ENCODE measurements at regions of chr17 and their contacts with region 1.

Region 1: DNA sequence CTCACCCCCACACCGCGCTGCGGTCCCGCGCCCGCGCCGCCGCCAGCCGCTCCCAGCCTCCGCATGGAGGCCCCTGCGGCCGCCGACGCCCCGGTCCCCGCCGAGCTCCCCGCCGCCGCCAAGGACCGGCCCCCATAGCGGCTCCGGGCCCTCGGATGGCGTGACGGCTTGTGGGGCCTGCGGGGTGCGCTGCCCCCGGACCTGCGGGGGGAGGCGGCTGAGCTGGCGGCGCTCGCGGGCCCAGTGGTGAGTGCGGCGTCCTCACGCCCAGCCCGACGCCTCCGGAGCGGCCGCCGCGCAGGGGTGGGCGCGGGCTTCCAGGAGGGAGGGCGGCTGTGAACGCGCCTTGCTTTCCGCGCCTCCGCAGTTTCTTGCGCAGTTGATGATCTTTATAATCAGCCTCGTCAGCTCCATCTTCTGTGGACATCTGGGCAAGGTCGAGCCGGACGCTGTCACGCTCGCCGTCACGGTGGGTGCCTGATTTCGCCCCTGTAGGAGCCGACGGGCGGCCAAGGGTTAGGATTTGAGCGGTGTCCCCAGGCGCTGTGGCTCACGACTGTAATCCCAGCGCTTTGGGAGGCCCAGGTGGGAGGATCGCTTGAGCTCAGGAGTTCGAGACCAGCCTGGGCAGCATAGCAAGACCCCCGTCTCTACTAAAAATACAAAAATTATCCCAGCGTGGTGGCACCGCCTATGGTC is 46.4 kb downstream of the SLC47A1 start:
- DNase-seq: peak in 1 of 2 donors; percentile 83
- ATAC-seq: peak; percentile 62
- H3K4me3 ChIP-seq: peak overlapping the region; percentile 15 to 48
- H3K27ac ChIP-seq: no peak overlapping the region
- H3K4me1 ChIP-seq: no peaks in the 10 kb centered on the region
- H3K27me3 ChIP-seq: no peaks in the 10 kb centered on the region

Region 2: GRCh38 chr17:19482576-19482975 is 97.4 kb before region 1 on chr17:
- intact Hi-C with region 1: no loop called
- DNase-seq: no peak
- ATAC-seq: peak; percentile 51
- H3K4me3 ChIP-seq: no peak overlapping the region
- H3K27ac ChIP-seq: no peak overlapping the region
- H3K4me1 ChIP-seq: no peaks in the 10 kb centered on the region
- H3K27me3 ChIP-seq: no peaks in the 10 kb centered on the region

Region 3: GRCh38 chr17:19523690-19524089 is 56.3 kb before region 1 on chr17:
- intact Hi-C with region 1: loop called in 1 of 2 experiments (anchors 1 kb)
- DNase-seq: no peak
- ATAC-seq: no peak
- H3K4me3 ChIP-seq: no peak overlapping the region
- H3K27ac ChIP-seq: no peak overlapping the region
- H3K4me1 ChIP-seq: no peaks in the 10 kb centered on the region
- H3K27me3 ChIP-seq: no peaks in the 10 kb centered on the region

Region 4: GRCh38 chr17:19533718-19534561 is 46.1 kb before region 1 on chr17 and contains the start of gene SLC47A1:
- intact Hi-C with region 1: no loop called
- DNase-seq: peak; percentile 62 to 84
- ATAC-seq: peak; percentile 88
- H3K4me3 ChIP-seq: peak within 1 kb of the TSS; percentile 63 to 65
- H3K27ac ChIP-seq: no peak within 1 kb of the TSS
- H3K4me1 ChIP-seq: no peaks in the 10 kb centered on the region
- H3K27me3 ChIP-seq: no peaks in the 10 kb centered on the region
- total RNA-seq, gene SLC47A1: 5.7 to 7.3 TPM

Region 5: GRCh38 chr17:19672009-19672750 is 92.2 kb after region 1 on chr17:
- intact Hi-C with region 1: no loop called
- DNase-seq: no peak
- ATAC-seq: peak; percentile 15
- H3K4me3 ChIP-seq: no peak overlapping the region
- H3K27ac ChIP-seq: peak overlapping the region in 1 of 2 donors; percentile 19
- H3K4me1 ChIP-seq: no peaks in the 10 kb centered on the region
- H3K27me3 ChIP-seq: no peaks in the 10 kb centered on the region

Region 6: GRCh38 chr17:19781488-19782458 is 201.8 kb after region 1 on chr17:
- intact Hi-C with region 1: no loop called
- DNase-seq: no peak
- ATAC-seq: no peak
- H3K4me3 ChIP-seq: no peak overlapping the region
- H3K27ac ChIP-seq: no peak overlapping the region
- H3K4me1 ChIP-seq: no peaks in the 10 kb centered on the region
- H3K27me3 ChIP-seq: no peaks in the 10 kb centered on the region

Measured in aorta (tissue), 5 donors.